MCF 10A (cell line): ENCODE measurements at regions of chr2 and their contacts with region 1.

Region 1: GRCh38 chr2:178112202-178113152 is at the start of gene RBM45:
- DNase-seq: peak; percentile 97
- H3K4me3 Mint-ChIP-seq: peak within 1 kb of the TSS; percentile 93
- H3K27ac Mint-ChIP-seq: peak within 1 kb of the TSS; percentile 87
- H3K4me1 Mint-ChIP-seq: peaks cover 7% of the 10 kb centered on the region
- H3K27me3 Mint-ChIP-seq: no peaks in the 10 kb centered on the region
- CTCF ChIP-seq: peak; percentile 94
- total RNA-seq, gene RBM45: 12.7 and 14.5 TPM in 2 replicates

Region 2: DNA sequence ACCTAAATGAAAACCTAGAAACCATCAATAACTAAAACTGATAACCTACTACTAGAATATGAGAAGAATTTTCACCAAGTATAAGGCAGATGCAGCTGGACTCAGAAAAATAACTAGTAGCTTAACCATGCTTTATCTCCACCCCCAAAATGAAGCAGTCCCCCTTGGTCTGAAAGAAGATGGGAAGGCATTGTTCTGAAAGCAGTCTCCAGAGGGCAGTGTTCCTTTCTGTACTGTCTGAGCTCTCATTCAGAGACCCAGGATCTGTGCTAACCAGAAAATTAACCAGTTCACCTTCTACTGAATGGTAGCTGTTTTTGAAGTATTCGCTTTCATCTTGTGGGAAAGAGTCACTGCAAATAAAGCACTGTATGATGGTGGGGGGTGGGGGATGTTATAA is 312.9 kb before region 1 on chr2:
- CTCF ChIA-PET with region 1: interaction called, 7 read pairs
- POLR2A ChIA-PET with region 1: no interaction called
- intact Hi-C with region 1: loop called (anchors 5 kb)
- DNase-seq: peak; percentile 54
- H3K4me3 Mint-ChIP-seq: no peak overlapping the region
- H3K27ac Mint-ChIP-seq: no peak overlapping the region
- H3K4me1 Mint-ChIP-seq: no peaks in the 10 kb centered on the region
- H3K27me3 Mint-ChIP-seq: peaks cover 43% of the 10 kb centered on the region
- CTCF ChIP-seq: peak; percentile 62

Region 3: GRCh38 chr2:178128836-178129630 is 16.6 kb after region 1 on chr2:
- CTCF ChIA-PET with region 1: interaction called, 51 read pairs
- POLR2A ChIA-PET with region 1: interaction called, 21 read pairs
- intact Hi-C with region 1: no loop called
- DNase-seq: no peak
- H3K4me3 Mint-ChIP-seq: no peak overlapping the region
- H3K27ac Mint-ChIP-seq: no peak overlapping the region
- H3K4me1 Mint-ChIP-seq: peaks cover 8% of the 10 kb centered on the region
- H3K27me3 Mint-ChIP-seq: no peaks in the 10 kb centered on the region
- CTCF ChIP-seq: no peak

Region 4: GRCh38 chr2:178450774-178451525 is 338.5 kb after region 1 on chr2 and contains the starts of genes PJVK and PRKRA:
- CTCF ChIA-PET with region 1: interaction called, 6 read pairs
- POLR2A ChIA-PET with region 1: interaction called, 12 read pairs
- intact Hi-C with region 1: no loop called
- DNase-seq: peak; percentile 95
- H3K4me3 Mint-ChIP-seq: peak within 1 kb of the TSS; percentile 88
- H3K27ac Mint-ChIP-seq: peak within 1 kb of the TSS; percentile 100
- H3K4me1 Mint-ChIP-seq: peaks cover 11% of the 10 kb centered on the region
- H3K27me3 Mint-ChIP-seq: no peaks in the 10 kb centered on the region
- CTCF ChIP-seq: no peak
- total RNA-seq, gene PJVK: 7.4 and 10.4 TPM in 2 replicates
- total RNA-seq, gene PRKRA: 51.4 and 58.9 TPM in 2 replicates

Region 5: DNA sequence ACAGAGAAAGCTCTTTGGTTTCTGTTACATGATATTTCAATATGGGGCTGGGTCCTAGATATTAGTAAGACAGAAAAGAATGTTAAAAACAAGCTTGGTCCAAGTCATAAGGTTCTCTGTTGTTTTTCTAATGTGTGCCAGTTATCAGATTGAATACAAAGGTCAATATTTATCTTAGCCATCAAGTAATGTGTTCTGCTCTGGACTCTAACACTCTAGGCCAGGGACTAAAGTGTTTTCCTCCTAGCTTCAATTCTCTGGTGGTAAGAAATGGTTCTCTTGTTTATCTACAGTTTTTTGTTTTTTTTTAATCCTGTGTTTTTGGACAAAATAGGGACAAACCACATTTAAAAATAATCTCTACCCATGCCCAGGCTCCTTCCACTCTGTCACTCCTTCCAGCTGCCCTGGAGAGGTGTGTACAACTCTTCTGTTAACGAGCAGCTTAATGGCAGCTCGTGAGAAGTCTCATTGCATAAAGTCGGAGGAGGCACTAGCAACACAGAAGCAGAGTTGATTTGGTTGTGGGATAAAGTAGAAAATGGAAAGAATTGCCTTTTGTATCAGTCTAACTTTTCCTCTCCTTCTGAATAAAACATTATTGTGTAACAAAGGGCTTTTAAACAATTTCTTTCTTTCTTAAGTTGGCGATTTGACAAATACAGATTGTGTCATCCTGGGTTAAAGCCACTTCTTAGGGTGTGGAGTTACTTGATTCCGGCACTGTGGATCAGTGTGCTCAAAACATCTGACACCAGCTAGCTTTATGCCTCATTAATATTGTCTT is 1160.1 kb after region 1 on chr2:
- CTCF ChIA-PET with region 1: no interaction called
- POLR2A ChIA-PET with region 1: no interaction called
- intact Hi-C with region 1: loop called (anchors 10 kb)
- DNase-seq: peak; percentile 88
- H3K4me3 Mint-ChIP-seq: peak overlapping the region; percentile 39
- H3K27ac Mint-ChIP-seq: peak overlapping the region; percentile 95
- H3K4me1 Mint-ChIP-seq: peaks cover 57% of the 10 kb centered on the region
- H3K27me3 Mint-ChIP-seq: no peaks in the 10 kb centered on the region
- CTCF ChIP-seq: no peak